AG04449 (cell line): ENCODE measurements at regions of chr4 and their contacts with region 1.

Region 1: DNA sequence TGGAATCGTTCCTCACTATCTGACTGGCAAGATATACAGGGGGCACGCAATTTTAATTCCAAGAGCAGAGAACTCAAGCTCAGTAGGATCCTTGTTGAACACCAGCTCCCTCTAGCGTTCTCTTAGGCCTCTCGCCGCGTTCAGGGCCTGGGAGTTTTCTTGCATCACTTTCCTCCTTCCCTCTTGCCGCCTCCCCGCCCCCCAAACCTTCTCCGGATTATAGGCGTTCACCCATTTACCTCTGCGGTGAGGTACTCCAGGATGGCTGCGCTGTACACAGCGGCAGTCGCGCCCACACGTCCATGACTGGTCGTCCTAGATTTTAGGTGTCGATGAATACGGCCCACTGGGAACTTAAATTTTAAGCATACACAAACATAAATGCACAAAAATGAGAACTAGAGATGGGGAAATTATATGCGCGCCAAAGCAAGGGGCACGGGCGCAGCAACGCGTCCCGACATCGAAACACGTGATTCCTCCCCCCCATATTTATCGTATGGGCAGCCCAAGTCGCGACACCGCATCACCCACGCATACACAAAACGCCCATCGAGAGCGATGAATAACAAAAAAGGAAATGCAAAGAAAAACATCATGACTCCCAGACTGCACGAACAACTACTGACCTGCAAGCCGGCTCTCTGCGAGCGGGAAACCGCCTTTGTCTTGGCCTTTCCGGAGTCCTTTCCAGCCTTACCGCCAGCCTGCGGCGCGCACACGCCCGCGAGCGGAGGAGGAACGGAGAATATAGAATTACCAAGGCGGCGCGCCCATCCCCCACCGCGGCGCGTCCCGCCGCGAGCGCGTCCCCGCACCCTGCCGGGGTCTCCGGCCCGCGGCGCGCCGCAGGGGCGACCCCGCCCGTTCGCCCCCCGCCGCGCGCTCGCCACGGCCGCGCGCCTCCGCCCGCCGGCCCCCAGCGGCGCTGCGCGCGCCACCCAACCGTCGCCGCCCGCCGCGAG is 759 bp downstream of the H2AZ1 start:
- DNase-seq: peak; percentile 68
- H3K4me3 ChIP-seq: peak overlapping the region; percentile 90
- CTCF ChIP-seq: peak; percentile 93

Region 2: GRCh38 chr4:99563310-99564186 is 385.8 kb before region 1 on chr4 and contains the start of gene TRMT10A:
- CTCF ChIA-PET with region 1: interaction called, 12 read pairs
- POLR2A ChIA-PET with region 1: interaction called, 5 read pairs
- DNase-seq: peak; percentile 85
- H3K4me3 ChIP-seq: peak within 1 kb of the TSS; percentile 85
- CTCF ChIP-seq: no peak

Region 3: DNA sequence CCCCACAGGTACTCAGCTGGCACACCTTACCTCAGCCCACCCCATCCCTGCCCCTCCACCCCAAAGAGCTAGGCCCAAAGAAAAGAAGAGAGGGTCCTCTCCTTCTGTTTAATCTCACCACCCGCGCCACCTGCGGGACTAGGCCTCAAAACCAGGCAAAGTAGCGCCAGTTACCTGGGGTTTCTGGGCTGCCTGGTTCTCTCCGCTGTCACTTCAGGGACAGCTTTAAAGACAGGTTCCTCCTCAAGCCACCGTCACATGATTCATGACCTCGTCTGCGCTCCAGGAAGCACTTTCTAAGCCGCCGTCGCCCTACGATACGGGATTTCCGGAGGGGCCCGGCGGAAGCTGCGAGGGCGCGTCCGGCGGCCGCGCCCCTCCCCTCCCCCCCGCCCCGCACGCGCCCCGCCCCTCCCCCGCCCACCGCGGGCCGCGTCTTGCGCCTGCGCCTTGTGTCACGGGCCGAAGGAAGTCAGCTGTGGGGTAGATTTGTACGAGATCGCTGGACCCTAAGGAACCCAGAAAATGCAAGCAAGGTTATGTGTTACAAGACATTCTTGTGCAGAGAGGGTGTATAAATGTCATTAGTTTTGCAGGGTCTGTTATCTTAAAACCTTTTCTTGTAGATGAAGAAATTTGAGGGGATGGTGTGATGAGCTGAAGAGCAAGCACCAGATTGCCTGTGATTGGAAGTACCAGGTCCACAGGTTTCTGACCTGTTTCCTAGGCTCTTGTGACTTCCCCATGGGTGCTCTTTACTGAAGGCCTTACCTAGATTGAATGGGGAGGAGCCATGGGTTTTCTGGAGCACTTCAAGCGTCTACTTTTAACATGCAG is 54.9 kb before region 1 on chr4 and contains the start of gene LAMTOR3:
- CTCF ChIA-PET with region 1: interaction called, 12 read pairs
- POLR2A ChIA-PET with region 1: interaction called, 6 read pairs
- DNase-seq: peak; percentile 42
- H3K4me3 ChIP-seq: peak within 1 kb of the TSS; percentile 84
- CTCF ChIP-seq: no peak

Region 4: GRCh38 chr4:100257567-100257966 is 308.3 kb after region 1 on chr4:
- CTCF ChIA-PET with region 1: no interaction called
- POLR2A ChIA-PET with region 1: no interaction called
- DNase-seq: no peak
- H3K4me3 ChIP-seq: no peak overlapping the region
- CTCF ChIP-seq: no peak